Mucosa of descending colon (tissue), 3 donors: ENCODE measurements at regions of chr6 and their contacts with region 1.

Region 1: GRCh38 chr6:113276601-113277000 is 580.5 kb upstream of the MARCKS start:
- DNase-seq: no peak
- ATAC-seq: no peak
- H3K4me3 ChIP-seq: no peak overlapping the region
- H3K4me1 ChIP-seq: no peaks in the 10 kb centered on the region
- CTCF ChIP-seq: no peak

Region 2: DNA sequence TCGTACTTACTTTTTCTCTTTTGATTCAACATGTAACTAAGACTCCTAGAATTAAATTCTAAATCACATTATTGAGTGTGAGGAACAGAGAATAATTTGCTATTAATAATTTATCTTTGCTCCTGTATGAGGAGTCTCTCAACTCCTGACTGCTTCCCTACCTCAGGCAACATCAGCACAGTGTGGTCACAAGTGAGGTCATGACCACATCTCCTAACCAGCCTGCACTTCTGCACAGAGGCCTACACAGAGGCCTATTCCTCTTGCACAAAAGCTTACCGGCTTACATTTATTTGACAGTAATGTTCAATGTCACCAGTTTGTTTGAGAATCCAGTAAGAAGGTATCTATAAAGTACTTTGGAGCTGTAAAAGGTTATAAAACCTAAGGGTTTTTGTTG is 56.8 kb before region 1 on chr6:
- intact Hi-C with region 1: no loop called
- DNase-seq: no peak
- ATAC-seq: no peak
- H3K4me3 ChIP-seq: no peak overlapping the region
- H3K4me1 ChIP-seq: no peaks in the 10 kb centered on the region
- CTCF ChIP-seq: no peak

Region 3: GRCh38 chr6:113344969-113345368 is 68.4 kb after region 1 on chr6:
- intact Hi-C with region 1: loop called in 1 of 2 experiments (anchors 2 kb)
- DNase-seq: no peak
- ATAC-seq: no peak
- H3K4me3 ChIP-seq: no peak overlapping the region
- H3K4me1 ChIP-seq: no peaks in the 10 kb centered on the region
- CTCF ChIP-seq: no peak